Head of caudate nucleus (tissue), 42 donors: ENCODE measurements at regions of chr4 and their contacts with region 1.

Region 1: DNA sequence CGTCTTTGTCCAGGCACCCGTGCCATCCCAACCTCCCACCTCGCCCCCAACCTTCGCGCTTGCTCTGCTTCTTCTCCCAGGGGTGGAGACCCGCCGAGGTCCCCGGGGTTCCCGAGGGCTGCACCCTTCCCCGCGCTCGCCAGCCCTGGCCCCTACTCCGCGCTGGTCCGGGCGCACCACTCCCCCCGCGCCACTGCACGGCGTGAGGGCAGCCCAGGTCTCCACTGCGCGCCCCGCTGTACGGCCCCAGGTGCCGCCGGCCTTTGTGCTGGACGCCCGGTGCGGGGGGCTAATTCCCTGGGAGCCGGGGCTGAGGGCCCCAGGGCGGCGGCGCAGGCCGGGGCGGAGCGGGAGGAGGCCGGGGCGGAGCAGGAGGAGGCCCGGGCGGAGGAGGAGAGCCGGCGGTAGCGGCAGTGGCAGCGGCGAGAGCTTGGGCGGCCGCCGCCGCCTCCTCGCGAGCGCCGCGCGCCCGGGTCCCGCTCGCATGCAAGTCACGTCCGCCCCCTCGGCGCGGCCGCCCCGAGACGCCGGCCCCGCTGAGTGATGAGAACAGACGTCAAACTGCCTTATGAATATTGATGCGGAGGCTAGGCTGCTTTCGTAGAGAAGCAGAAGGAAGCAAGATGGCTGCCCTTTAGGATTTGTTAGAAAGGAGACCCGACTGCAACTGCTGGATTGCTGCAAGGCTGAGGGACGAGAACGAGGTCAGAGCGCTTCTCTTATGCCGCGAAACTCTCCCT is at the start of gene TET2:
- DNase-seq: peak; percentile 73 to 96 (median 90)

Region 2: GRCh38 chr4:105241451-105241850 is 95.0 kb after region 1 on chr4:
- intact Hi-C with region 1: loop called (anchors 5 kb)
- DNase-seq: peak; percentile 15 to 86 (median 70)

Region 3: GRCh38 chr4:105471566-105472176 is 325.2 kb after region 1 on chr4:
- intact Hi-C with region 1: loop called (anchors 2 kb)
- DNase-seq: peak in 41 of 42 donors; percentile 13 to 90 (median 72)

Region 4: GRCh38 chr4:105708530-105709391 is 562.3 kb after region 1 on chr4 and contains the starts of genes GSTCD and INTS12:
- intact Hi-C with region 1: loop called (anchors 5 kb)
- DNase-seq: peak; percentile 89 to 98 (median 94)